ENCODE measurements at regions of chr3 and their contacts with region 1.

Region 1: DNA sequence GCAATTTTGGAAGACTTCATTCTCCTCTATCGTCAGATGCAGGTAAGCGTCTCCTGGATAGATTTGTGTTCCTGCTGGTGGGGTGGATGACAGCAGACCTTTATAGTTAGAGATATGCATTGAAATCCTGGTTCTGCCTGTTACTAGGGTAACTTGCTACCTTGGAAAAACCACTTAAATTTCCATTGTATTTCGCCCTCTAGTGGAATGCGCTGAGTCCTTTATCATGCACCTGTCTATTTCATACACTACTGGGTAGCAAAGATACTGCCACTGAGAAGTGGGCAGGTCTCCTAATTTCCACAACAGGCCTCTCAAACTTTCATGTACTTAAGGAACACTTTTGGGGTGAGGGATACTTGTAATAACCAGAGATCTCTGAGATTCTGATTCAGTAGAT is 209.5 kb upstream of the SUCLG2 start:
- DNase-seq: peak; percentile 32
- ATAC-seq: peak; percentile 84
- H3K4me3 ChIP-seq: no peak overlapping the region
- H3K27ac ChIP-seq: no peak overlapping the region
- H3K4me1 ChIP-seq: no peaks in the 10 kb centered on the region
- H3K27me3 ChIP-seq: no peaks in the 10 kb centered on the region; a peak in 1 of 5 replicates
- CTCF ChIP-seq: peak; percentile 59
- EP300 ChIP-seq: no peak
- POLR2A ChIP-seq: no peak
- RAD21 ChIP-seq: no peak

Region 2: GRCh38 chr3:67384760-67385397 is 479.0 kb before region 1 on chr3:
- CTCF ChIA-PET with region 1: no interaction called
- POLR2A ChIA-PET with region 1: no interaction called
- in situ Hi-C with region 1: no loop called
- intact Hi-C with region 1: loop called (anchors 2 kb)
- DNase-seq: peak; percentile 23
- ATAC-seq: peak; percentile 82
- H3K4me3 ChIP-seq: no peak overlapping the region
- H3K27ac ChIP-seq: no peak overlapping the region
- H3K4me1 ChIP-seq: no peaks in the 10 kb centered on the region
- H3K27me3 ChIP-seq: no peaks in the 10 kb centered on the region
- CTCF ChIP-seq: peak; percentile 64
- EP300 ChIP-seq: no peak
- POLR2A ChIP-seq: no peak
- RAD21 ChIP-seq: no peak

Region 3: DNA sequence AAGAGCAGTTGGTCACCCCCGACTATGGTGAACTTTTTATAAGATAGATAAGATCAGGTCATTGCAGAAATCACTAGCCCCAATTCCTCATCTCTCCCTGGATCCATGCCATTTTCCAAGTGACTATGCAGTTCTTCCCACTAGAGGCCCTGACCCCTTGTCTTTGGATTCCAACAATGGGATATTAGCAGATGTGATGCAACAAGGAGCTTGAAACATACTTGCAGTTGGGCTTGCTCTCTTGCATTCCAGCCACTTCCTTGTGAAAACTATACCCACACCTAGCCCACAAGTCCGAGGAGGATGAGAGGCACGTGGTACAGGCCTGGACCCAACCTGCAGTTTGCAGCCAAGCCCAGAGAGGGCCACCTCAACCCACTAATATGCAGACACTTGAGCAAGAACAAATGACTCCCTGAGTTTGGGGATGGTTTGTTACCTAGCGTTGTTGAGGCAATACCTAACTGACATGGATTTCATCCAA is 270.1 kb before region 1 on chr3:
- CTCF ChIA-PET with region 1: no interaction called
- POLR2A ChIA-PET with region 1: no interaction called
- in situ Hi-C with region 1: no loop called
- intact Hi-C with region 1: loop called (anchors 10 kb)
- DNase-seq: peak; percentile 14
- ATAC-seq: peak; percentile 88
- H3K4me3 ChIP-seq: no peak overlapping the region
- H3K27ac ChIP-seq: no peak overlapping the region
- H3K4me1 ChIP-seq: peaks cover 29% of the 10 kb centered on the region
- H3K27me3 ChIP-seq: no peaks in the 10 kb centered on the region
- CTCF ChIP-seq: peak; percentile 38
- EP300 ChIP-seq: no peak
- POLR2A ChIP-seq: no peak
- RAD21 ChIP-seq: peak; percentile 41

Region 4: GRCh38 chr3:67624078-67624477 is 239.8 kb before region 1 on chr3:
- CTCF ChIA-PET with region 1: no interaction called
- POLR2A ChIA-PET with region 1: no interaction called
- in situ Hi-C with region 1: no loop called
- intact Hi-C with region 1: no loop called
- DNase-seq: no peak
- ATAC-seq: no peak
- H3K4me3 ChIP-seq: no peak overlapping the region
- H3K27ac ChIP-seq: no peak overlapping the region
- H3K4me1 ChIP-seq: peaks cover 15% of the 10 kb centered on the region; the same call in 1 of the 2 replicates
- H3K27me3 ChIP-seq: no peaks in the 10 kb centered on the region
- CTCF ChIP-seq: no peak
- EP300 ChIP-seq: no peak
- POLR2A ChIP-seq: no peak
- RAD21 ChIP-seq: no peak

Region 5: DNA sequence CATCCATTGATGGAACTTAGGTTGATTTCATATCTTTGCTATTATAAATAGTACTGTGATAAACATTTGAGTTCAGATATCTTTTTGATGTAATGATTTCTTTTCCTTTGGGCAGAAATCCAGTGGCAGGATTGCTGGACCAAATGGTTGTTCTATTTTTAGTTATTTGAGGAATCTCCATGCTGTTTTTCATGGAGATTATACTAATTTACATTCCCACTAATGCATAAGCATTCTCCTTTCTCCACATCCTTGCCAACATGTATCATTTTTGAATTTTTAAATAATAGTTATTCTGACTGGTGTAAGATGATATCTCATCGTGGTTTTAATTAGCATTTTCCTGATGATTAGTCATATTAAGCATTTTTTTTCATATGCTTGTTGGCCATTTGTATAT is 65.5 kb before region 1 on chr3:
- CTCF ChIA-PET with region 1: no interaction called
- POLR2A ChIA-PET with region 1: no interaction called
- in situ Hi-C with region 1: no loop called
- intact Hi-C with region 1: no loop called
- DNase-seq: no peak
- ATAC-seq: no peak
- H3K4me3 ChIP-seq: no peak overlapping the region
- H3K27ac ChIP-seq: no peak overlapping the region
- H3K4me1 ChIP-seq: no peaks in the 10 kb centered on the region
- H3K27me3 ChIP-seq: no peaks in the 10 kb centered on the region
- CTCF ChIP-seq: no peak
- EP300 ChIP-seq: no peak
- POLR2A ChIP-seq: no peak
- RAD21 ChIP-seq: no peak